ENCODE measurements at regions of chr2 and their contacts with region 1.

Region 1: GRCh38 chr2:96208143-96209010 is at the start of gene STARD7:
- DNase-seq: peak; percentile 97
- ATAC-seq: peak; percentile 95
- H3K4me3 ChIP-seq: peak within 1 kb of the TSS; percentile 84 to 96 (median 91)
- H3K27ac ChIP-seq: peak within 1 kb of the TSS; percentile 99
- H3K4me1 ChIP-seq: peaks cover 63% of the 10 kb centered on the region
- H3K27me3 ChIP-seq: no peaks in the 10 kb centered on the region; a peak in 1 of 5 replicates
- CTCF ChIP-seq: peak; percentile 54; the same call in 1 of the 2 replicates
- EP300 ChIP-seq: no peak
- POLR2A ChIP-seq: peak; percentile 98
- RAD21 ChIP-seq: peak; percentile 72
- total RNA-seq, gene STARD7: 300 and 332 TPM in 2 replicates

Region 2: DNA sequence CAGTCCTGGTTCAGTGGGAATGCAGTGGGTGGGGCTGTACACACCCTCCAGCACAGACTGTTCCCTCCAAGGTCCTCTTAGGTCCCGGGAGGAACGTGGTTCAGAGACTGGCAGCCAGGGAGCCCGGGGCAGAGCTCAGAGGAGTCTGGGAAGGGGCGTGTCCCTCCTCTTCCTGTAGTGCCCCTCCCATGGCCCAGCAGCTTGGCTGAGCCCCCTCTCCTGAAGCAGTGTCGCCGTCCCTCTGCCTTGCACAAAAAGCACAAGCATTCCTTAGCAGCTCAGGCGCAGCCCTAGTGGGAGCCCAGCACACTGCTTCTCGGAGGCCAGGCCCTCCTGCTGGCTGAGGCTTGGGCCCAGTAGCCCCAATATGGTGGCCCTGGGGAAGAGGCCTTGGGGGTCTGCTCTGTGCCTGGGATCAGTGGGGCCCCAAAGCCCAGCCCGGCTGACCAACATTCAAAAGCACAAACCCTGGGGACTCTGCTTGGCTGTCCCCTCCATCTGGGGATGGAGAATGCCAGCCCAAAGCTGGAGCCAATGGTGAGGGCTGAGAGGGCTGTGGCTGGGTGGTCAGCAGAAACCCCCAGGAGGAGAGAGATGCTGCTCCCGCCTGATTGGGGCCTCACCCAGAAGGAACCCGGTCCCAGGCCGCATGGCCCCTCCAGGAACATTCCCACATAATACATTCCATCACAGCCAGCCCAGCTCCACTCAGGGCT is 823.4 kb before region 1 on chr2:
- CTCF ChIA-PET with region 1: no interaction called
- POLR2A ChIA-PET with region 1: no interaction called
- in situ Hi-C with region 1: no loop called
- intact Hi-C with region 1: no loop called
- DNase-seq: no peak
- ATAC-seq: peak; percentile 61
- H3K4me3 ChIP-seq: peak overlapping the region in 1 of 3 experiments; percentile 52; a peak in 1 of 6 replicates
- H3K27ac ChIP-seq: no peak overlapping the region
- H3K4me1 ChIP-seq: peaks cover 40% of the 10 kb centered on the region
- H3K27me3 ChIP-seq: 0 out of 5 replicates have a peak, but pooled peaks cover 0 to 5% of the 10 kb centered on the region in 2 experiments
- CTCF ChIP-seq: no peak
- EP300 ChIP-seq: no peak
- POLR2A ChIP-seq: no peak
- RAD21 ChIP-seq: no peak

Region 3: DNA sequence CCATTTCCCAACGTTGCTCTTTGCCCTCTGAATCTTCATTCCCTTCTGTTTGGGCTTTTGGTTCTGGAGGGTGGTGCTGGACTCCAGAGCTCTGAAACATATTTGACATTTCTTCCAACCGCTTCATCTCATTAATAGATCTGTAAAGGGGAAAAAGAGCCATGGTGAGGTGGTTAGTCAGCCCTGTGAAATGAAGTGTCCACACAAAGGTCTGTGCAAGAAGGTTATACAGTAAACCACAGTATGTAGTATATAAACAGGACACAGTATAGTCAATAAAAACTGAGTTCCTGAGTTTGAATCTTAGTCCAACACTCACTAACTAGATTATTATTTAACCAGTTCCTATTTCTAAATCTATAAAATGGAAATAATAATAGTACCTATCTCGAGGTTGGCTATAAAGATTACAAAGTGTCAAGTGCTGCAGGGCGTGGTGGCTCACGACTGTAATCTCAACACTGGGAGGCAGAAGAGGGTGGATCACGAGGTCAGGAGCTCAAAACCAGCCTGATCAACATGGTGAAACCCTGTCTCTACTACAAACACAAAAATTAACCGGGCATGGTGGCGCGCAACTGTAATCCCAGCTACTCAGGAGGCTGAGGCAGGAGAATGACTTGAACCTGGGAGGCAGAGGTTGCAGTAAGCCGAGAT is 12.8 kb before region 1 on chr2:
- CTCF ChIA-PET with region 1: no interaction called
- POLR2A ChIA-PET with region 1: interaction called, 18 read pairs
- in situ Hi-C with region 1: no loop called
- intact Hi-C with region 1: no loop called
- DNase-seq: peak; percentile 35
- ATAC-seq: peak; percentile 80
- H3K4me3 ChIP-seq: no peak overlapping the region
- H3K27ac ChIP-seq: peak overlapping the region; percentile 10
- H3K4me1 ChIP-seq: peaks cover 29% of the 10 kb centered on the region
- H3K27me3 ChIP-seq: no peaks in the 10 kb centered on the region
- CTCF ChIP-seq: 0 out of 2 replicates have a peak, but pooled peaks have one; percentile 23
- EP300 ChIP-seq: no peak
- POLR2A ChIP-seq: no peak
- RAD21 ChIP-seq: no peak

Region 4: DNA sequence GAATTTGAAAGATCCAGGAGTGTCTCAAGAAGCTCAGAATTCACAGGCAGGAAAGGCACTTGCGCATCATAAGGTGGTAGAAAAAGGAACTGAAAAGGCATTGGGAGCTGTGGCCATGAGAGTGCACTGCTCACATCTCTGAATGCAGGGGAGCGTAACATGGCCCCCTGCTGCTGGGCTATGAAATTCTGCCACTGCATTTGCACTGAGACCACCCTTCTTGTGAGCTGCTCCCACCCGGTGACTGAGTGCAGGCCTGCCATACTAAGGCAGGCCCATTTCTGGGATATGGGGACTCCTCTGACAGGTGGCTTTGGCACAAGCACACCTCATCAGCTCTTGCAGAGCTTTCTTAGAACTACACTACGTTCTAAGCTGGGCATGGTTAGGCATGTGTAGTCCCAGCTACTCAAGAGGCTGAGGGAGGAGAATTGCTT is 25.5 kb after region 1 on chr2:
- CTCF ChIA-PET with region 1: no interaction called
- POLR2A ChIA-PET with region 1: interaction called, 23 read pairs
- in situ Hi-C with region 1: no loop called
- intact Hi-C with region 1: no loop called
- DNase-seq: no peak
- ATAC-seq: no peak; the same call in 2 of the 3 replicates
- H3K4me3 ChIP-seq: no peak overlapping the region
- H3K27ac ChIP-seq: no peak overlapping the region
- H3K4me1 ChIP-seq: peaks cover 7% of the 10 kb centered on the region; the same call in 1 of the 2 replicates
- H3K27me3 ChIP-seq: no peaks in the 10 kb centered on the region
- CTCF ChIP-seq: no peak
- EP300 ChIP-seq: no peak
- POLR2A ChIP-seq: no peak
- RAD21 ChIP-seq: no peak

Region 5: DNA sequence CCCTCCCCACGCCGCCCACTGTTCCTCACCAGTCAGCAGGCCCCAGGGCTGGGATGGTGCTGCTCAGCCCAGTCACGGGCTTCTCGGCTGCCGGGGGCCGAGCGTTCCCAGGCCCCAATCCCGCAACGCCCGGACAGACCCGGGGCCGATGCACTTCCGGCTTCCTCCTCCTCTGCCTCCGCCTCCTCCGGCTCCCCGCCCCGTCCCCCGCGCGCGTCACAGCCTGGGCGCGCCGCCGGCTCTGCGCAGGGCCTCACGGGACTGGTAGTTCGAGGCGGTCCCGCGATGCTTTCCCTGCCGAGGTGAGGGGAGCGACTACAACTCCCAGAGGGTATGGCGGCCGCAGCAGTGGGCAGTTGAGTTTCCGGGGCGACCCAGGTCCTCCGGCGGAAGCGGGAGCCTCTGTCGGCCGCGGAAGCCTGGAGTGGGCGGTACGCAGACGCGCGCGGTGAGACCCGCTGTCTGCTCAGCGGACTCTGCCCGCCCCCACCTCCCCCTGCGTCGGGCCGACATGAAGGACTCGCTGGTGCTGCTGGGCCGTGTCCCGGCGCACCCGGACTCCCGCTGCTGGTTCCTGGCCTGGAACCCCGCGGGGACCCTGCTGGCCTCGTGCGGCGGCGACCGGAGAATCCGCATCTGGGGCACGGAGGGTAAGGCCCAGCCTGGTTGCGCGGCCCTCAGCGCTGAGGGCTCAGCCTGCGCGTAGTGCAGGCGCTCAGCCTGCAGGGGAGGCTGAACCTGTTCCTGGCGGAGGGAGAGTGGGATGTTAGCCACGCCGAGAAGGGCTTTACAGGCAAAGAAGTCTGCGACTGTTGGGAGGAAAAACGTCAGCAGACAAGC is 57.7 kb after region 1 on chr2 and contains the starts of genes CIAO1 and TMEM127:
- CTCF ChIA-PET with region 1: no interaction called
- POLR2A ChIA-PET with region 1: interaction called, 91 read pairs
- in situ Hi-C with region 1: loop called (anchors 5 kb)
- intact Hi-C with region 1: no loop called
- DNase-seq: peak; percentile 98
- ATAC-seq: peak; percentile 90
- H3K4me3 ChIP-seq: peak within 1 kb of the TSS; percentile 95 to 97 (median 96)
- H3K27ac ChIP-seq: peak within 1 kb of the TSS; percentile 83
- H3K4me1 ChIP-seq: peaks cover 47% of the 10 kb centered on the region
- H3K27me3 ChIP-seq: no peaks in the 10 kb centered on the region; a peak in 1 of 5 replicates
- CTCF ChIP-seq: peak; percentile 58
- EP300 ChIP-seq: peak in 1 of 2 experiments; percentile 65; a peak in 2 of 4 replicates
- POLR2A ChIP-seq: peak in 1 of 2 experiments; percentile 84; a peak in 2 of 4 replicates
- RAD21 ChIP-seq: peak; percentile 67; the same call in 1 of the 2 replicates
- total RNA-seq, gene CIAO1: 99.3 and 118 TPM in 2 replicates
- total RNA-seq, gene TMEM127: 15.7 and 21.5 TPM in 2 replicates

Region 6: GRCh38 chr2:96320728-96321622 is 112.6 kb after region 1 on chr2:
- CTCF ChIA-PET with region 1: no interaction called
- POLR2A ChIA-PET with region 1: interaction called, 11 read pairs
- in situ Hi-C with region 1: no loop called
- intact Hi-C with region 1: loop called (anchors 10 kb)
- DNase-seq: no peak
- ATAC-seq: peak; percentile 24
- H3K4me3 ChIP-seq: peak overlapping the region; percentile 61 to 74 (median 67)
- H3K27ac ChIP-seq: no peak overlapping the region
- H3K4me1 ChIP-seq: peaks cover 64% of the 10 kb centered on the region
- H3K27me3 ChIP-seq: peaks cover 7 to 29% of the 10 kb centered on the region in 2 experiments; a peak in 4 of 5 replicates
- CTCF ChIP-seq: no peak
- EP300 ChIP-seq: no peak
- POLR2A ChIP-seq: no peak
- RAD21 ChIP-seq: no peak

Measured in HepG2 (cell line).